Mucosa of descending colon (tissue), 3 donors: ENCODE measurements at regions of chr1 and their contacts with region 1.

Region 1: DNA sequence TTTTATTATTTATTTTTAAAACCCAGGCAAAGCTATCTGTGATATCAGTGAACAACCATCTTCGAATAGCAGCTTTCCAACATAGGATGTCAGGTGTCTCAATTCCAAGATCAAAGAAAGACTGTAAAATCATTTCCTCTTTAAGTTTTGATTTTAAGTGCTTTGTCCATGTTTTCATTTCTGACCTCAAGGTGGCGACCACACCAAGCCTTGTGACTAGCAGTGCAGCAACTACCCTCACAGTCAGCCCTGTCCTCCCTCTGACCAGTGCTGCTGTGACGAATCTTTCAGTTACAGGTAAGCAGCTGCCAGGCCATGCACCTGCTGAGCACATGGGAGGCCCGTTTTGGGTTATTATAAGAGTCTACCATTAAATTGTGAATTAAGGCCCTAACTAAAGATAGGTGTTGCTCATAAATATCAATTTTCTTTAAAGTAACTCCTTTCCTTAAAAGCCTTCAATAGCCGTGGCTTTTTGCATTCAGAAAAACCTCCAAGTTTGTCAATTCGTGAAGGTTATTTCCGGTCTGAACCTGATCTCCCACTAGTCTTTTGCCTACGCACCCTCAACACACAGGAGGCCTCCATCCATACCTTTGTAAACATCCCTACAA is 117.0 kb downstream of the CD247 start:
- DNase-seq: peak; percentile 48 to 80 (median 58)
- ATAC-seq: peak; percentile 95
- H3K4me3 ChIP-seq: no peak overlapping the region
- H3K4me1 ChIP-seq: no peaks in the 10 kb centered on the region
- CTCF ChIP-seq: no peak

Region 2: GRCh38 chr1:167043752-167044488 is 357.4 kb before region 1 on chr1:
- intact Hi-C with region 1: no loop called
- DNase-seq: peak; percentile 86 to 90 (median 88)
- ATAC-seq: peak; percentile 98
- H3K4me3 ChIP-seq: no peak overlapping the region
- H3K4me1 ChIP-seq: peaks cover 15% of the 10 kb centered on the region
- CTCF ChIP-seq: no peak

Region 3: GRCh38 chr1:167297222-167298214 is 103.8 kb before region 1 on chr1:
- intact Hi-C with region 1: no loop called
- DNase-seq: peak in 2 of 3 donors; percentile 26 to 71
- ATAC-seq: peak; percentile 98
- H3K4me3 ChIP-seq: no peak overlapping the region
- H3K4me1 ChIP-seq: peaks cover 9% of the 10 kb centered on the region
- CTCF ChIP-seq: no peak

Region 4: GRCh38 chr1:167533851-167534300 is 132.5 kb after region 1 on chr1:
- intact Hi-C with region 1: loop called in 1 of 2 experiments (anchors 10 kb)
- DNase-seq: peak in 2 of 3 donors; percentile 76 to 77
- ATAC-seq: peak; percentile 93
- H3K4me3 ChIP-seq: no peak overlapping the region
- H3K4me1 ChIP-seq: no peaks in the 10 kb centered on the region
- CTCF ChIP-seq: peak; percentile 84